BJ (cell line): ENCODE measurements at regions of chr13 and their contacts with region 1.

Region 1: GRCh38 chr13:79423801-79424642 is 18.0 kb upstream of the RBM26 start:
- DNase-seq: no peak
- H3K4me3 ChIP-seq: no peak overlapping the region
- H3K27me3 ChIP-seq: no peaks in the 10 kb centered on the region
- CTCF ChIP-seq: peak; percentile 60

Region 2: DNA sequence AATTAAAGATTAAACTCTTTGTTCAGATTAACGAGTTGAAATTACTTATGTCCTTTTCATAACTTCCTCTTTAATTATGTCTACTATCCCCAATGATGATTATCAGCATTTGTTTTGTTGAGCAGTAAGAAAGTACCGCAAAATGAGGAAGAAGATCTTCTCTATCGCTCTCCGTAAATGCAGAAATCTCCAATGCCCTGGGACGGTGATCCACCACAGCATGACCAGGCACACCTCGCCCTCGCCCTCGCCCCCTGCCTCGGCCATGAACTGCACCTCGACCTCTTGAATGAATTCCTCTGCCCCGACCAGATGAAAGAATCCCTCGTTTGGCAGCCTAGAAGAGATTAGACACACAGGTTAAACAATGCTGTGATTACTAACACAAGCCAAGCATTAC is 87.1 kb before region 1 on chr13:
- CTCF ChIA-PET with region 1: no interaction called
- POLR2A ChIA-PET with region 1: no interaction called
- DNase-seq: no peak
- H3K4me3 ChIP-seq: no peak overlapping the region
- H3K27me3 ChIP-seq: no peaks in the 10 kb centered on the region
- CTCF ChIP-seq: no peak

Region 3: GRCh38 chr13:79393564-79394249 is 30.3 kb before region 1 on chr13:
- CTCF ChIA-PET with region 1: no interaction called
- POLR2A ChIA-PET with region 1: no interaction called
- DNase-seq: no peak
- H3K4me3 ChIP-seq: no peak overlapping the region
- H3K27me3 ChIP-seq: no peaks in the 10 kb centered on the region
- CTCF ChIP-seq: no peak

Region 4: GRCh38 chr13:79413521-79413920 is 10.5 kb before region 1 on chr13:
- CTCF ChIA-PET with region 1: interaction called, 23 read pairs
- POLR2A ChIA-PET with region 1: no interaction called
- DNase-seq: no peak
- H3K4me3 ChIP-seq: no peak overlapping the region
- H3K27me3 ChIP-seq: no peaks in the 10 kb centered on the region
- CTCF ChIP-seq: no peak

Region 5: GRCh38 chr13:79480954-79481684 is 57.1 kb after region 1 on chr13 and contains the start of gene NDFIP2:
- CTCF ChIA-PET with region 1: interaction called, 20 read pairs
- POLR2A ChIA-PET with region 1: interaction called, 8 read pairs
- DNase-seq: no peak
- H3K4me3 ChIP-seq: peak within 1 kb of the TSS; percentile 94
- H3K27me3 ChIP-seq: peaks cover 7% of the 10 kb centered on the region; the same call in 1 of the 2 replicates
- CTCF ChIP-seq: 0 out of 2 replicates have a peak, but pooled peaks have one; percentile 3
- polyA plus RNA-seq, gene NDFIP2: 53.8 and 71.5 TPM in 2 replicates

Region 6: GRCh38 chr13:79528759-79529191 is 104.8 kb after region 1 on chr13:
- CTCF ChIA-PET with region 1: interaction called, 3 read pairs
- POLR2A ChIA-PET with region 1: interaction called, 10 read pairs
- DNase-seq: no peak
- H3K4me3 ChIP-seq: no peak overlapping the region
- H3K27me3 ChIP-seq: no peaks in the 10 kb centered on the region
- CTCF ChIP-seq: no peak

Region 7: DNA sequence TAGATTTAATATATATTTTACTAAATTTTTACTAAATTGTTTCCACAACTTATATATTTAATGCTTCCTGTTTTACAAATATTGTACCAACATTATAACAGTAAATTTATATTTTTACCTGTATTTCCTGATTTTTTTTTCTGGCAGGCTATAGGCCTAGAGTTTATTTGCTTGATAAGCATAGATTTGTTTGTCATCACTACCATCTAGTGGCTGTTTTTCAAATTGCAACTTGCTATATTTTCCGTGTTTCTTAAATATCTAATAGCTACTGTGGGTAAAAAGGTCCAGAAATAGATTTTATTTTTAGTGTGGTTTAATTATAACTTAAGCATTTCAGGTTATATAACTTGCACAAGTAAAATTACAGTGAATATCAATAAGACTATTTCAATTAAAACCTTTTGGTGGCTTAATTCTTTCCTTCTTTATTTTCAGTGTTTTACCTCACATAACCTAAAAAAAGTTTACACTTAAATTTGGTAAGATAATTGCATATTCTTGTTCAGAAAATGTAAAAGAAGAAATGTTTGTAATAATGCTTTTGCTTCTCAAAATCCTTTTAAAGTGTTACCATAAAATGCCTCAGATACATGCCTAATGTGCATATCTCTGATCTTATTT is 117.5 kb after region 1 on chr13:
- CTCF ChIA-PET with region 1: interaction called, 55 read pairs
- POLR2A ChIA-PET with region 1: interaction called, 4 read pairs
- DNase-seq: peak; percentile 28
- H3K4me3 ChIP-seq: no peak overlapping the region
- H3K27me3 ChIP-seq: no peaks in the 10 kb centered on the region
- CTCF ChIP-seq: peak; percentile 58